CD14-positive monocyte (primary cell): ENCODE measurements at regions of chr18 and their contacts with region 1.

Region 1: GRCh38 chr18:26621161-26622026 is 73.0 kb upstream of the KCTD1 start:
- DNase-seq: peak; percentile 43 to 62 (median 54)
- H3K4me3 ChIP-seq: peak overlapping the region in 1 of 3 experiments; percentile 58
- H3K4me3 Mint-ChIP-seq: peak overlapping the region; percentile 38 to 83
- H3K27ac ChIP-seq: no peak overlapping the region
- H3K27ac Mint-ChIP-seq: no peak overlapping the region
- H3K4me1 ChIP-seq: peaks cover 7 to 10% of the 10 kb centered on the region in 2 donors
- H3K4me1 Mint-ChIP-seq: peaks cover 11% of the 10 kb centered on the region
- H3K27me3 ChIP-seq: no peaks in the 10 kb centered on the region
- H3K27me3 Mint-ChIP-seq: peaks cover 0 to 4% (median 0%) of the 10 kb centered on the region in 3 donors
- CTCF ChIP-seq: peak; percentile 88

Region 2: DNA sequence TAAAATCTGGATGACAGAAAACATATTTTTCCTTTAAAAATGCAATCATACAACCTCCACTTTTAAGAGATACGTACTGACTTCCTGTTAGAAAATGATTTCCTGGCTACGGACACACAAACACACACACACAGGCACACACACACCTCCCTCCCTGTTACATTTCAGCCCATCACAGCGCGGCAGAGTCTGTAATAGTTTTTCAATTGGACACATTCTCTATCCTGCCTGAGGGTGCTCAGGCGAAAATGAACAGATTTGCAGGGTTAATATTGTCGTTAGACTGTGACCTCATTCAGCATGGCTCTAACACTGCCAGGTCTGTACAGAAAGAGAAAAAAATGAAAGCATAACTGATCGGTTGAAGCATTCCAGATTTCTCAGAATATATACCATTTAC is 118.0 kb before region 1 on chr18:
- intact Hi-C with region 1: no loop called
- DNase-seq: no peak
- H3K4me3 ChIP-seq: no peak overlapping the region
- H3K4me3 Mint-ChIP-seq: no peak overlapping the region
- H3K27ac ChIP-seq: no peak overlapping the region
- H3K27ac Mint-ChIP-seq: no peak overlapping the region
- H3K4me1 ChIP-seq: no peaks in the 10 kb centered on the region
- H3K4me1 Mint-ChIP-seq: no peaks in the 10 kb centered on the region
- H3K27me3 ChIP-seq: no peaks in the 10 kb centered on the region
- H3K27me3 Mint-ChIP-seq: peaks cover 0 to 1% (median 0%) of the 10 kb centered on the region in 3 donors
- CTCF ChIP-seq: no peak

Region 3: DNA sequence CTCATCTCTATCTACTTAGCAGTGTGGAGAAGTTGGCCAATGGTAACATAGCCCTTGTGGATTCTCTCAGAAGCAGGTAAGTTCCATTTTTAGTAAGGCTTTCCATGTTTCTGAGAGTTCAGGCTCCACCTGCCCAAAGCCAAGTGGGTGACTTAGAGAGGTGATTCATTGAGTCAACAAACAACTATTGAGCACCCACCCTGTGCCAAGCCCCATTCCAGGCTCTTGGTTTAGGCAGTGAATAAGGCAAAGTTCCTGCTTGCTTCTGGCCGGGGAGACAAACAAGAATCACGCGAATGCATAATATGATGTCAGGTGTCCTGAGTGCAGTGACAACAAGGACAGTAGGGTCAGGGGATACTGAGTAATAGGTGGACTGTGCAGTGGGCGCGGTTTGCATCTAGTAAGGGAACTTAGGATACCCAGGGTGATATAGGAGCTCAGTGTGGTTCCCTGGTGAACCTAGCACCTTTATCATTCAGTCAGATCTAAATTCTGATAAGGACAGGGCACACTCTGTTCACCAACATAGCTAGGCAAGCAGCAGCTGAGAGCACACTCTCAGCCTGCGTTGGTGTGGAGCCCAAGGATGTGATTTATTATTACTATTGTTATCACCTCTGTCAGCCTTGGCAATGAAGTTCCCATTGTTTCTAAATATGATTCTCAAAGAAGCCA is 41.3 kb before region 1 on chr18:
- intact Hi-C with region 1: no loop called
- DNase-seq: no peak
- H3K4me3 ChIP-seq: no peak overlapping the region
- H3K4me3 Mint-ChIP-seq: no peak overlapping the region
- H3K27ac ChIP-seq: no peak overlapping the region
- H3K27ac Mint-ChIP-seq: no peak overlapping the region
- H3K4me1 ChIP-seq: no peaks in the 10 kb centered on the region
- H3K4me1 Mint-ChIP-seq: peaks cover 6% of the 10 kb centered on the region
- H3K27me3 ChIP-seq: peaks cover 22 to 28% of the 10 kb centered on the region in 2 donors
- H3K27me3 Mint-ChIP-seq: peaks cover 23 to 31% (median 27%) of the 10 kb centered on the region in 3 donors
- CTCF ChIP-seq: no peak

Region 4: GRCh38 chr18:26648509-26649192 is 27.3 kb after region 1 on chr18:
- intact Hi-C with region 1: loop called in 1 of 2 experiments (anchors 2 kb)
- DNase-seq: no peak
- H3K4me3 ChIP-seq: no peak overlapping the region
- H3K4me3 Mint-ChIP-seq: no peak overlapping the region
- H3K27ac ChIP-seq: no peak overlapping the region
- H3K27ac Mint-ChIP-seq: no peak overlapping the region
- H3K4me1 ChIP-seq: peaks cover 10 to 11% of the 10 kb centered on the region in 2 donors
- H3K4me1 Mint-ChIP-seq: peaks cover 12% of the 10 kb centered on the region
- H3K27me3 ChIP-seq: peaks cover 55 to 72% of the 10 kb centered on the region in 2 donors
- H3K27me3 Mint-ChIP-seq: peaks cover 48 to 78% (median 63%) of the 10 kb centered on the region in 3 donors
- CTCF ChIP-seq: no peak

Region 5: DNA sequence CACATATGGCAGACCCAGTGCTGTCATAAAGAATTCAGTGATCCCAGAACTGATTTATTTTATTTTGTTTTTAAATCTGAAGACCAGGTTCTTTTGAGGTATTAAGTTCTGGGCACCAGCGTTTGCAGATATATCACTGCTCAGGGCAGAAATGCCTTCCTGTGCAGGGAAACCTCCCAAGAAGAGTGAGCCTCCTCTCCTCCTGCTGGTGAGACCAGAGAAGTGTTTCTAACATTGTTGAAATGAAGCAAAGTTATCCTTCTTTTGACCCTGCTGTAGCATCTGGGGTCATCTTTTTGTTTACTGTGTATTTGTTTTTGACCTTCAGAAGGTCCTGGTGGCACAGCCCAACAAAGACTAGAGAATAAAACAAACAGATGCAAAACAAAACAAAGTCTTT is 150.1 kb after region 1 on chr18:
- intact Hi-C with region 1: loop called in 1 of 2 experiments (anchors 10 kb)
- DNase-seq: peak in 1 of 3 donors; percentile 26
- H3K4me3 ChIP-seq: no peak overlapping the region
- H3K4me3 Mint-ChIP-seq: no peak overlapping the region
- H3K27ac ChIP-seq: no peak overlapping the region
- H3K27ac Mint-ChIP-seq: no peak overlapping the region
- H3K4me1 ChIP-seq: peaks cover 10 to 23% of the 10 kb centered on the region in 2 donors
- H3K4me1 Mint-ChIP-seq: peaks cover 17% of the 10 kb centered on the region
- H3K27me3 ChIP-seq: no peaks in the 10 kb centered on the region
- H3K27me3 Mint-ChIP-seq: peaks cover 0 to 3% (median 0%) of the 10 kb centered on the region in 3 donors
- CTCF ChIP-seq: peak; percentile 61

Region 6: GRCh38 chr18:27599202-27599829 is 977.9 kb after region 1 on chr18:
- intact Hi-C with region 1: loop called in 1 of 2 experiments (anchors 5 kb)
- DNase-seq: peak in 2 of 3 donors; percentile 10 to 15
- H3K4me3 ChIP-seq: no peak overlapping the region
- H3K4me3 Mint-ChIP-seq: no peak overlapping the region
- H3K27ac ChIP-seq: no peak overlapping the region
- H3K27ac Mint-ChIP-seq: no peak overlapping the region
- H3K4me1 ChIP-seq: no peaks in the 10 kb centered on the region
- H3K4me1 Mint-ChIP-seq: no peaks in the 10 kb centered on the region
- H3K27me3 ChIP-seq: no peaks in the 10 kb centered on the region
- H3K27me3 Mint-ChIP-seq: peaks cover 0 to 1% (median 1%) of the 10 kb centered on the region in 3 donors
- CTCF ChIP-seq: peak; percentile 86

Region 7: DNA sequence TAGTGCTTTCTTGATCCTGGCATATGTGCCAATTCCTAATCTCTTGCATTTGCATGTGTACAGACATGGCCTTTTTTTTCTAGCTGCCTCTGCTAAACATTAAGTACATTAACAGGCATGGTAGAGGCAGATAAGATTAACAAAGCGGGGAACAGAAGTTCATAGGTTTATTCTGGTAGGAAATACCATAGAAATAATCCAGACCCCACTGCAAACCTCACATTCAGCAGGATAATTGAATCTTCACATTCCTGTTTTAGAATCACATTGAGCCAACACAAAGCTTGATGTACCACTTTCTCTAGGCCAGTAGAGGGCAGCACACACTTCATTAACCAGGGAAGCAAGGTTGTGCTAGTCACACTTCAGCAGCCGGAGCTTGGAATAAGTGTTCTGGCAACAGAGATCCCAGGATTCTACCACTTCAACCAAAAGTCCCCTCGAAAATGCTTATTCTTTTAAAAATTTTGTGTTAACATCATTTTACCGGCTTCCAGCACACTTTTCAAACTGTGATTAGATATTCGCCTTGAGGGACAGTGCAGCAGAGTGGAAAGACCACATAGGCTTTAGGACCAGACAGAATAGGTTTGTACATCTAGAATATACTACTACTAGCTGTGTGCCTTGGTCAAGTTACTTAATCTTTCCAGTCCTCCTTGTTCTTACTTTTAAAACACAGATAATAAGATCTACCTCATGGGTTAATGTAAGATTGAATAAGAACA is 983.9 kb after region 1 on chr18:
- intact Hi-C with region 1: loop called in 1 of 2 experiments (anchors 5 kb)
- DNase-seq: peak in 2 of 3 donors; percentile 12 to 21
- H3K4me3 ChIP-seq: no peak overlapping the region
- H3K4me3 Mint-ChIP-seq: no peak overlapping the region
- H3K27ac ChIP-seq: no peak overlapping the region
- H3K27ac Mint-ChIP-seq: no peak overlapping the region
- H3K4me1 ChIP-seq: no peaks in the 10 kb centered on the region
- H3K4me1 Mint-ChIP-seq: no peaks in the 10 kb centered on the region
- H3K27me3 ChIP-seq: no peaks in the 10 kb centered on the region
- H3K27me3 Mint-ChIP-seq: no peaks in the 10 kb centered on the region
- CTCF ChIP-seq: peak; percentile 81